ENCODE measurements at regions of chr10 and their contacts with region 1.

Region 1: GRCh38 chr10:104054430-104054829 is 31.2 kb downstream of the COL17A1 start:
- DNase-seq: no peak
- H3K4me3 ChIP-seq: no peak overlapping the region
- H3K27ac ChIP-seq: no peak overlapping the region
- H3K4me1 ChIP-seq: no peaks in the 10 kb centered on the region
- H3K27me3 ChIP-seq: no peaks in the 10 kb centered on the region
- CTCF ChIP-seq: no peak

Region 2: DNA sequence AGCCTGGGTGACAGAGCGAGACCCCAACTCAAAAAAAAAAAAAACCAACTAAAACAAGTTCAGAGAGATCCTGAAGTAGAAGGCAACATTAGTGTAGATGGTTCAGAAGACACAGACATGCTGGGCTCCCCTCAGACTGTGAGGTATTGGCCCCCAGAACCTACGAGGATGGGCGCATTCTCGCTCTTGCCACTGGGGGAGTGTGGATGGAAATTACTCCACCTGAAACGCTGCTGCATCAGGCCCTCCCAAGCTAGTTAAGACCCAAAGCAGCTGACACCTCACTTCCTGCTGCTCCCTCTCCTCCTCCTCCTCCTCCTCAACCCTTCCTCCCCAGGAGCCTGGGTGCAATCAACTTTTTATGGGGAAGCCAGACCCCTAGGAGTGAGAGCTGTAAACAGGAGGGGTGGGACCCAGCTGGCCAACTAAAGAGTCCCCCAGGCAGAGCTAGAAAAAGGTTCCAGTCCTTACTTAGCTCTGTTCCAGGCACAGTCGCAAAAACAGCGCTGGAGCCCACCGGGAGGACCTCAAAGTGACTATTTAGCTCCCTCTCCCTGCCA is 206.4 kb before region 1 on chr10:
- CTCF ChIA-PET with region 1: interaction called, 10 read pairs
- POLR2A ChIA-PET with region 1: no interaction called
- intact Hi-C with region 1: no loop called
- DNase-seq: no peak
- H3K4me3 ChIP-seq: no peak overlapping the region
- H3K27ac ChIP-seq: peak overlapping the region; percentile 38
- H3K4me1 ChIP-seq: peaks cover 56% of the 10 kb centered on the region
- H3K27me3 ChIP-seq: no peaks in the 10 kb centered on the region
- CTCF ChIP-seq: peak; percentile 44

Measured in A673 (cell line).